Activated CD8-positive, alpha-beta T cell treated with anti-CD3 and anti-CD28 coated beads for 36 hours (primary cell): ENCODE measurements at regions of chr17 and their contacts with region 1.

Region 1: GRCh38 chr17:7989781-7990655 is 12.4 kb upstream of the GUCY2D start:
- DNase-seq: peak; percentile 96
- ATAC-seq: peak; percentile 95
- H3K4me3 Mint-ChIP-seq: peak overlapping the region; percentile 73
- H3K27ac Mint-ChIP-seq: peak overlapping the region; percentile 92
- H3K4me1 Mint-ChIP-seq: peaks cover 20% of the 10 kb centered on the region
- H3K27me3 Mint-ChIP-seq: no peaks in the 10 kb centered on the region
- CTCF ChIP-seq: peak; percentile 84

Region 2: DNA sequence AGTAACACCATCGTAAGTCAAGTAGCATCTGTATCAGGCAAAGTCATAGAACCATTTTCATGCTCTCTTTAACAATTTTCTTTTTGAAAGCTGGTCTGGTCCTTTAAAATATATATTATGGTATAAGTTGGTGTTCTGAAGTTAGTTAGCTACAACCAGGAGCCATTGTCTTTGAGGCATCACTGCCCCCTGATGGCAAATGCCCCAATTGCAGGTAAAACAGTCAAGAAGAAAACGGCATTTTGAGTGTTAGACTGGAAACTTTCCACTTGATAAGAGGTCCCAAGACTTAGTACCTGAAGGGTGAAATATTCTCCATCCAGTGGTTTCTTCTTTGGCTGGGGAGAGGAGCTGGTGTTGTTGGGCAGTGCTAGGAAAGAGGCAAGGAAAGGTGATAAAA is 316.8 kb before region 1 on chr17:
- CTCF ChIA-PET with region 1: no interaction called
- POLR2A ChIA-PET with region 1: no interaction called
- intact Hi-C with region 1: no loop called
- DNase-seq: peak; percentile 79
- ATAC-seq: no peak
- H3K4me3 Mint-ChIP-seq: no peak overlapping the region
- H3K27ac Mint-ChIP-seq: no peak overlapping the region
- H3K4me1 Mint-ChIP-seq: no peaks in the 10 kb centered on the region
- H3K27me3 Mint-ChIP-seq: no peaks in the 10 kb centered on the region
- CTCF ChIP-seq: peak; percentile 65

Region 3: GRCh38 chr17:7684851-7685532 is 305.0 kb before region 1 on chr17:
- CTCF ChIA-PET with region 1: no interaction called
- POLR2A ChIA-PET with region 1: no interaction called
- intact Hi-C with region 1: no loop called
- DNase-seq: no peak
- ATAC-seq: no peak
- H3K4me3 Mint-ChIP-seq: peak overlapping the region; percentile 92
- H3K27ac Mint-ChIP-seq: peak overlapping the region; percentile 99
- H3K4me1 Mint-ChIP-seq: peaks cover 30% of the 10 kb centered on the region
- H3K27me3 Mint-ChIP-seq: no peaks in the 10 kb centered on the region
- CTCF ChIP-seq: no peak

Region 4: DNA sequence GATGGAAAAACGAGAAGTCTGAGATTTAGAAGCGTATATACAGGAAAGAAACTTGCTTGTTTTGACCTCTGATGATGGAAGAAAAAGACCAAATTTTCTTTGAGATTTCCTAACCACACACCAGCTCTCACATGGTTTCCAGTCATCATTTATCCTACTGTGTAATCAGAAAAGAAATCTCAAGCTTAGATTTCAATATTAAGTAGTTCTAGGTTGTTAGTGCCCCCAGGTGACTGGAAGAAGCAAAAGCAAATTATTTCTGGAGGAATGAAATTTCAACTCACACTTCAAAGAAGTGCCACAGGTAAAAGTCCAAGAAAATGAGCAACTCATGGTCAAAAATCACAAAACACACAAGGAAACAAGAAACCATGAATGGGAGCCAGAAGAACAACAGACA is 207.8 kb before region 1 on chr17:
- CTCF ChIA-PET with region 1: no interaction called
- POLR2A ChIA-PET with region 1: no interaction called
- intact Hi-C with region 1: no loop called
- DNase-seq: no peak
- ATAC-seq: no peak
- H3K4me3 Mint-ChIP-seq: no peak overlapping the region
- H3K27ac Mint-ChIP-seq: no peak overlapping the region
- H3K4me1 Mint-ChIP-seq: no peaks in the 10 kb centered on the region
- H3K27me3 Mint-ChIP-seq: peaks cover 2% of the 10 kb centered on the region
- CTCF ChIP-seq: no peak

Region 5: DNA sequence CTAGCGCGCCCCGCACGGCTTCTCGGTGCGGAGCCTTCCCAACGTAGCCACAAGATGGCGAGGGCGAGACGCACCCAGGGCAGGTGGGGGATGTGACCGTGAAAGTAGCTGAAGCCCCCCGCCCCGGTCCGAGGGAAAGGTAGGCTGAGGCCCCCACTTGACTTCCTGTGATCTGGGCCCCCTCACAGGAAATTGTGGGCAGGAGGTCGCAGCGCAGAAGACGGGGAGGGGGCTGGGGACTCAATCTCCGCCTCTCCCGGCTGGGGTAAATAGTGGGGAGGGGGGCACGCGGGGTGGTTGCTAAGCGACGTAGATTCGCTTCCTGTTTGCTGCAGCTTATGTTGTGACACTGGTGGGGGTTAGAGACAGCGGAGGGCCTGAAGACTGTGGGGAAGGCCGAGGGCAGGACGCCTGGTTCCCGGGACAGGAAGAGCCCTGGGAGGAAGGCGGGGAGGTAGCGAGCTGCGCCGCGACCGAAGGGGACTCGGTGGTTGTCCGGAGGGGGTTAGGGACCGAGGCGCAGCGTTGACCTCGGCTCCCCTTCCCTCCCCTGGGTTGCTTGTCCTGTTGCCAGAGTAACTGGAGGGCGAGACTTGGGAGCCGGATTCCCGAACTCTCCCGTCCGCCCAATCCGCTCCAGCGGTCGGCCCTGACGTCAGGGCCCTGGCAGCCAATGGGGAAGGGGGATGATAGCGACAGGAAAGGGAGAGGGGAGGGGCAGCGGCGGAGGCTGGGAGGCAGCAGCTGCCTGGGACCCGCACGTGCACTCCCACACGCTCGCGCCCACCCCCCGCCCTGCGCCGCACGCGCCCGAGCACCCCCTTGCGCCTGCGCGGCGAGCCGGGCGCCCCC is 154.8 kb before region 1 on chr17:
- CTCF ChIA-PET with region 1: interaction called, 11 read pairs
- POLR2A ChIA-PET with region 1: interaction called, 3 read pairs
- intact Hi-C with region 1: no loop called
- DNase-seq: peak; percentile 94
- ATAC-seq: peak; percentile 50
- H3K4me3 Mint-ChIP-seq: peak overlapping the region; percentile 83
- H3K27ac Mint-ChIP-seq: peak overlapping the region; percentile 91
- H3K4me1 Mint-ChIP-seq: peaks cover 41% of the 10 kb centered on the region
- H3K27me3 Mint-ChIP-seq: no peaks in the 10 kb centered on the region
- CTCF ChIP-seq: peak; percentile 84

Region 6: GRCh38 chr17:7897773-7898172 is 92.2 kb before region 1 on chr17:
- CTCF ChIA-PET with region 1: interaction called, 14 read pairs
- POLR2A ChIA-PET with region 1: no interaction called
- intact Hi-C with region 1: no loop called
- DNase-seq: peak; percentile 25
- ATAC-seq: peak; percentile 58
- H3K4me3 Mint-ChIP-seq: no peak overlapping the region
- H3K27ac Mint-ChIP-seq: peak overlapping the region; percentile 58
- H3K4me1 Mint-ChIP-seq: peaks cover 11% of the 10 kb centered on the region
- H3K27me3 Mint-ChIP-seq: no peaks in the 10 kb centered on the region
- CTCF ChIP-seq: no peak

Region 7: DNA sequence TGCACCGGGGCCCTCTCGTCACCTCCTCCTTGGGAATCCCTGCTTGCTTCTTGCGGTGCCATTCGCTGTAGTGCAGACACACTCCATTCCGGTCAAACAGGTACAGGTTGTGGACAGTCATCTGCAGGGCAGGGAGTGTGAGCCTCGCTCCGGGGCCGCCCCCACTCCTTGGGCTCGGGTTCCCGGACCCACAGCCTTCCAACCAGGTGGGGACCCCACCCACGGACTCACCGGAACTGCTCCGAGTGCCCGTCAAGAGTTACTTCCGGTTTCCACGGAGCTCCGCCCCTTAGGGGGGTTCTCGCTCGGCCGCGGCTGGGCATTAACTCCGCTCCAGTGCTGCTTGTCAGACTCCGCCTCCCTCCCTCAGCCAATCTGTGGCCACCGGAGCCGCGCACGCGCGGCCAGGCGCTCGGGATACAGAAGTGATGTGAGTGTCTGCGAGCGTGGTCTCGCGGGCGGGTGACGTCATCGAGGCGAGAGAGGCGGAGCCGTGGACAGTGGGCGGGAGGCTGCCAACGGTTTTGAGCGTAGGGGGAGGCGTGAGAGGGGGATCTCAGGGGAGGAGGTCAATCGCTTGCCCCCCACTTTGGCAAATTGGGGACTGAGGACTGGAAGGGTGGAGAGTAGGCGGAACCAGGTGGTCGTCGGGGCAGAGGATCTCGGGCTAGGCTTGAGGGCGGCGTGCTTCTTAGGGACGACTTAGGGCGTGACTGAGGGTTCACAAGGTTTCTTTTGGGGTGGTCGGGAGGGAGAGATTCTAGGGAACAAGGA is 58.1 kb before region 1 on chr17 and contains the starts of genes CNTROB and TRAPPC1:
- CTCF ChIA-PET with region 1: interaction called, 90 read pairs
- POLR2A ChIA-PET with region 1: interaction called, 4 read pairs
- intact Hi-C with region 1: no loop called
- DNase-seq: peak; percentile 99
- ATAC-seq: peak; percentile 99
- H3K4me3 Mint-ChIP-seq: peak within 1 kb of the TSS; percentile 87
- H3K27ac Mint-ChIP-seq: peak within 1 kb of the TSS; percentile 94
- H3K4me1 Mint-ChIP-seq: peaks cover 40% of the 10 kb centered on the region
- H3K27me3 Mint-ChIP-seq: no peaks in the 10 kb centered on the region
- CTCF ChIP-seq: no peak
- total RNA-seq, gene CNTROB: 48.4 to 54.1 TPM
- total RNA-seq, gene TRAPPC1: 140 to 143 TPM

Region 8: GRCh38 chr17:7977805-7978204 is 12.2 kb before region 1 on chr17:
- CTCF ChIA-PET with region 1: interaction called, 18 read pairs
- POLR2A ChIA-PET with region 1: no interaction called
- intact Hi-C with region 1: no loop called
- DNase-seq: no peak
- ATAC-seq: no peak
- H3K4me3 Mint-ChIP-seq: no peak overlapping the region
- H3K27ac Mint-ChIP-seq: no peak overlapping the region
- H3K4me1 Mint-ChIP-seq: no peaks in the 10 kb centered on the region
- H3K27me3 Mint-ChIP-seq: peaks cover 2% of the 10 kb centered on the region
- CTCF ChIP-seq: no peak

Region 9: GRCh38 chr17:8057691-8058114 is 67.7 kb after region 1 on chr17:
- CTCF ChIA-PET with region 1: interaction called, 61 read pairs
- POLR2A ChIA-PET with region 1: interaction called, 3 read pairs
- intact Hi-C with region 1: no loop called
- DNase-seq: peak; percentile 60
- ATAC-seq: peak; percentile 80
- H3K4me3 Mint-ChIP-seq: no peak overlapping the region
- H3K27ac Mint-ChIP-seq: no peak overlapping the region
- H3K4me1 Mint-ChIP-seq: peaks cover 15% of the 10 kb centered on the region
- H3K27me3 Mint-ChIP-seq: peaks cover 39% of the 10 kb centered on the region
- CTCF ChIP-seq: peak; percentile 74